ENCODE measurements at regions of chr17 and their contacts with region 1.

Region 1: GRCh38 chr17:5592382-5592781 is 8.1 kb upstream of the NLRP1 start:
- DNase-seq: no peak
- H3K4me3 ChIP-seq: no peak overlapping the region
- CTCF ChIP-seq: peak; percentile 11

Region 2: DNA sequence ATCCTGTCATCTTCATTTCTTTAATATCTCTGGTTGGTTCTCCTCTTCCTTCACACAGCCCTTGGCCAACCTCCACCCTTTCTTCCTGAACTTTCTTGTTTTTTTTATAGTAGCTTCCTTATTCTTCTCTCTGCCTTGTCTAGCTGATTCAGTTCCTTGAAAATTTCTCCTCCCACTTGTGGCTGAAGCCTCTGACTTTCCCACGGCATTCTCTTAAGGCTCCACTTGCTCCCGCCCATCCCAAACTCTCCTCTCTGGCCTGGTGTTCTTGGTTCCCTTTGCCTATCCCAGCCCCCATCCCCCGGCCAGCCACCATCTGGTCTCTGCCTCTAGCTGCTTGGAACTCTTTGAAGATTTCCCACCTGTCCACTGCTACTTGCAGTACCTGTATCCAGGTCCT is 37.1 kb before region 1 on chr17:
- CTCF ChIA-PET with region 1: no interaction called
- POLR2A ChIA-PET with region 1: no interaction called
- DNase-seq: peak; percentile 68
- H3K4me3 ChIP-seq: no peak overlapping the region
- CTCF ChIP-seq: no peak

Region 3: DNA sequence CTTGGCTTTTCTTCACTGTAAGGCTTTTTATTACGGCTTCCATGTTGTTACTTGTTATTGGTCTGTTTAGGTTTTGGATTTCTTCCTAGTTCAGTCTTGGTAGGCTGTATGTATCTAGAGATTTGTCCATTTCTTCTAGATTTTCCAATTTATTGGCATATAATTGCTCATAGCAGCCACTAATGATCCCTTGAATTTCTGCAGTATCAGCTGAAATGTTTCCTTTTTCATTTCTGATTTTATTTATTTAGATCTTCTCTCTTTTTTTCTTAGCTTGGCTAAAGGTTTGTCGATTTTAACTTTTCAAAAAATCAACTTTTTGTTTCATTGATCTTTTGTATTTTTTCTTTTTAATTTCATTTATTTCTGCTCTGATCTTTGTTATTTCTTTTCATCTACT is 26.6 kb before region 1 on chr17:
- CTCF ChIA-PET with region 1: no interaction called
- POLR2A ChIA-PET with region 1: no interaction called
- DNase-seq: no peak
- H3K4me3 ChIP-seq: no peak overlapping the region
- CTCF ChIP-seq: no peak

Region 4: DNA sequence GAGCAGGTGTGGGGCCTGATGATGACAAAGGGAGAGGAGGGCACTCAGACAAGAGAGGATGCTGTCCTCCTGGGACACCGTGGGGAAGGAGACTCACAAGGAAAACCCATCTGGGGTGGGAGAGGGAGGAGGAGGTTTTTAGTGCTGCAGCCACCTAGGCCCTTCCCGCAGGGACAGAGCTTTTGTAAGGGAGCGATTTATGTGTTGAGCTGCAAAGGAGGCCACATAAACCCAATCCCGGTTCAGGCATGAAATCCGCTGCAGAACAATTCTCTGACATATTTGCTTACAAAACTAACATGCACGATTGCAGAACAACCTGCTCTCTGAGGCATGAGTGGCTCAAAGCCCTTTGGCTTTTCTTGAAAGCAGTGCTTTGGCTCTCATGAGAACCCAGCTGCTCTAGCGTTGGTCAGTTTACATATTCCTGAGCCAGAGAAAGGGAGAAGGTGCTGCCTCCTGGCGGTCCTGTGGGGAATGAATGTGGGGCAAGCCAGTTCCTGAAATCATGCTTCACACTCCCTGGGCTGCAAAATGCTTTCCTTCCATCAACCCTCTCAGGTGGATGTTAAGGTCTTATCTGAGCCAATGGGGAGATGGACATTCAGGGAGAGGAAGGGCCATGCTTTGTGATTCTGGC is 114.3 kb after region 1 on chr17:
- CTCF ChIA-PET with region 1: interaction called, 53 read pairs
- POLR2A ChIA-PET with region 1: interaction called, 3 read pairs
- DNase-seq: peak; percentile 10
- H3K4me3 ChIP-seq: no peak overlapping the region
- CTCF ChIP-seq: peak; percentile 92

Region 5: DNA sequence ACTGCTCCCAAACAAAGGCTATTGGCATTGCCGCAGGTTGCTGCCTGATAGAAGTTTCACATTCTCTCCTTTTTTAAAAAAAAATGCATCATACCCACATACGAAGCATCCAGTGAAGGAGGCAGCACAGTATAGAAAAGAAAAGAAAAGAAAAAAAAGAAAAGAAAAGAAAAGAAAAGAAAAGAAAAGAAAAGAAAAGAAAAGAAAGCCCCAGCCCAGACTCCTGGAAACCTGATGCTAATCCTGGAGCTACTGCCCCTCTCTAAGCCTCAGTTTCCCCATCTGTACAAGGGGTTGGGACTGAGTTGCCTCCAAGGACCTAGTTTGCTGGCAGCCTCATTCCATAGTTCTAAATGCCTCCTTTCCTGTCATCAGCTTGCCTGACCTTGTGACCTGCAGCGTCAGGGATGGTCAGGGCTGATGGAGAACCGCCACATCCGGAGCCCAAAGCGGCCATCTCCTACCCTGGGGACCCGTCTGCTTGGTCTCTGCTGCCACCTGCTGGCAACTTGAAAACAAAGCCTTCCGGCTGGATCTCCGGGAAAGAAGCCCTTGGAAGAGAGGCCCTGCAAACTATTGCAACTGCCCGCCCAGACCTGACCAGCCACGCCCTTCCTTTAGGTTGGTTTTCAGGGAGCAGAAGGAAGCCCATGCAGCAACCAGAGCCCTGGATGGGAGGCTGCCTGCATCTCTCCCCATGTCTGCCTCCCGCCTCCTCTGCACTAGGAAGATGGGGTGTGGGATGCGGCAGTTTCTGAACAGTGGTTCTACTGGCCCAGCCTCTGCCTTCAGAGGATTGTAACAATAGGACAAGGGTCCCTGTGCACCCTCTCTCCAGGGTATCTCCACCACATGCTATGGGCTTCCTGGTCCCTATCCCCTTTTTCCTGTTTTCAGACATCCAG is 829.6 kb after region 1 on chr17:
- CTCF ChIA-PET with region 1: interaction called, 280 read pairs
- POLR2A ChIA-PET with region 1: no interaction called
- DNase-seq: no peak
- H3K4me3 ChIP-seq: no peak overlapping the region
- CTCF ChIP-seq: peak; percentile 85

Region 6: GRCh38 chr17:6435968-6436367 is 843.6 kb after region 1 on chr17:
- CTCF ChIA-PET with region 1: interaction called, 34 read pairs
- POLR2A ChIA-PET with region 1: no interaction called
- DNase-seq: no peak
- H3K4me3 ChIP-seq: no peak overlapping the region
- CTCF ChIP-seq: peak; percentile 87

Measured in AG04449 (cell line).